ENCODE measurements at regions of chr17 and their contacts with region 1.

Region 1: DNA sequence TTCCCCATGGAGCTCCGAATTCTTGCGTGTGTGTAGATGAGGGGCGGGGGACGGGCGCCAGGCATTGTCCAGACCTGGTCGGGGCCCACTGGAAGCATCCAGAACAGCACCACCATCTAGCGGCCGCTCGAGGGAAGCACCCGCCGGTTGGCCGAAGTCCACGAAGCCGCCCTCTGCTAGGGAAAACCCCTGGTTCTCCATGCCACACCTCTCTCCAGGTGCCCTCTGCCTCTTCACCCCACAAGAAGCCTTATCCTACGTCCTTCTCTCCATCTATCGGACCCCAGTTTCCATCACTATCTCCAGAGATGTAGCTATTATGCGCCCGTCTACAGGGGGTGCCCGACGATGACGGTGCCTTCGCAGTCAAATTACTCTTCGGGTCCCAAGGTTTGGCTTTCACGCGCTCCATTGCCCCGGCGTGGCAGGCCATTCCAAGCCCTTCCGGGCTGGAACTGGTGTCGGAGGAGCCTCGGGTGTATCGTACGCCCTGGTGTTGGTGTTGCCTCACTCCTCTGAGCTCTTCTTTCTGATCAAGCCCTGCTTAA is 617 bp upstream of the SENP3 start:
- DNase-seq: peak; percentile 90
- CTCF ChIP-seq: peak; percentile 86

Region 2: DNA sequence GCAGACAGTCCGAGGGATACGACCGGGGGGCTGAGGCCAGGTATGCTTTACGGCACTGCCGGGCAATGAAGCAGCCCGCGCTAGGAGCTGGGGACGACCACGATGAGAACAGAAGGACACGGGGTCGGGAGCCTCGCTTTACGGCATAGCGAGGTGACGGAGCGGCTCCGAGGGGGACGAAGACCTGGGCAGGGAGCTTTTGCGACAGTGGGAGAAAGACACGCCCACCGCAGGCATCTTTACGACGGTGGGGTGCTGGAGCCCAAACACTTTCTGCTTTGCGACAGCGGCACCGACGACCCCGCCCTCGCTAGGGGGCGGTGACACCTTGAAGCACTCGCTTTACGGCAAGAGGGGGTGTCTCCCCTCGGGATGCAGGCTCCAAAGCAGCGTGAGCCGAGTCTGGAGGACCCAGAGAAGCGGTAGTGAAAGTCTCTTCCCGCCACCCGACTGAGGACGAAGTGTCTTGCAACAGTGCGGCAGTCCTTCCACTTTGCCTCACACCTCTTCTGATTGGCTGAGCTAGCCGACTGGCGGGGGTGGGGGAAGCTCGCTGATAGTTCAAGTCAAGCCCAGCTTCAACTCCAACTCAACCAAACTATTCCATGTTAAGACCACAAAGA is 231.6 kb before region 1 on chr17:
- CTCF ChIA-PET with region 1: interaction called, 12 read pairs
- POLR2A ChIA-PET with region 1: no interaction called
- DNase-seq: peak; percentile 95
- CTCF ChIP-seq: no peak

Region 3: DNA sequence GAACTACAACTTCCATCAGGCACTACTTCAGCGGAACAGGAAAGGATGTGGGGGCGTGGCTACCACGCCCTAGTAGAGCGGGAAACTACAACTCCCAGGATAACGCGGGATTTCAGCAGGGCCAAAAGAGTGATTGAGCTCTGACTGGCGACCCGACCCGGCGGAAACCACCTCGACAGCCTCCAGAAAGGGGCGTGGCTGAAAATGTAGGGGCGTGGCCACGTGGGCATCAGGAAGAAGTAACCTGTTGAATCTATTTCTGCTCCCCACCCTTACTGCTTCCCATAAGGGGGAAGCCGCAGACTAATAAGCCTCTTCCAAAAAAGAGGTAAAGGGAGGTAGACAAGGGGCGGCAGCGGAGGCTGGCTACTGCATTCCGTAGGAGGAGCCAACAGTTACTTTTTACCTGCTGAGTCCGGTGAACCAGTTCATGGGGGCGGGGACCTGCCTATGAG is 125.9 kb before region 1 on chr17 and contains the start of gene TMEM102:
- CTCF ChIA-PET with region 1: interaction called, 27 read pairs
- POLR2A ChIA-PET with region 1: interaction called, 3 read pairs
- DNase-seq: peak; percentile 97
- CTCF ChIP-seq: no peak

Region 4: DNA sequence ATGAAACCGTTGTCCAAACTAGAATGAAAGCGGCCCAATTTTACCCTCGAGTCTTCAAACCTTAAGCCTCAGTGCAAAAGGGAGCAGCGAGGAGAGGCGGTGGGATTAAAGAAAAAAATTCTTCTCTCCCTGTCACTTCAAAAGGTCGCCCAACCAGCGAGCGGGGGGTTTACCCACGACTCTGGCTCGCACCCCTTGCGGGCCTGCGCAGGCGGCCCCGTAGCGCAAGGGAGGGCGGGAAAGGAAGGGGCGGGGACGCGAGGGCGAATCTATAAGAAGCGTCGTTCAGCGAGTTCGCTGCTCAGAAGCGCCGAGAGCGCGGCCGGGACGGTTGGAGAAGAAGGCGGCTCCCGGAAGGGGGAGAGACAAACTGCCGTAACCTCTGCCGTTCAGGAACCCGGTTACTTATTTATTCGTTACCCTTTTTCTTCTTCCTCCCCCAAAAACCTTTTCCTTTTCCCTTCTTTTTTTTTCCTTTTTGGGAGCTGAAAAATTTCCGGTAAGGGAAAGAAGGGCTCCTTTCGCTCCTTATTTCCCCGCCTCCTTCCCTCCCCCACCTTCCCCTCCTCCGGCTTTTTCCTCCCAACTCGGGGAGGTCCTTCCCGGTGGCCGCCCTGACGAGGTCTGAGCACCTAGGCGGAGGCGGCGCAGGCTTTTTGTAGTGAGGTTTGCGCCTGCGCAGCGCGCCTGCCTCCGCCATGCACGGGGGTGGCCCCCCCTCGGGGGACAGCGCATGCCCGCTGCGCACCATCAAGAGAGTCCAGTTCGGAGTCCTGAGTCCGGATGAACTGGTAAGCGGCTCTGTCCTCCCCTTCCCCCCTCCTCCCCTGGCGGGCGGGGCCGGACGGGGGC is 76.8 kb before region 1 on chr17 and contains the start of gene POLR2A:
- CTCF ChIA-PET with region 1: interaction called, 11 read pairs
- POLR2A ChIA-PET with region 1: interaction called, 6 read pairs
- DNase-seq: peak; percentile 99
- CTCF ChIP-seq: no peak

Region 5: GRCh38 chr17:7515911-7516610 is 45.0 kb before region 1 on chr17:
- CTCF ChIA-PET with region 1: interaction called, 74 read pairs
- POLR2A ChIA-PET with region 1: no interaction called
- DNase-seq: no peak
- CTCF ChIP-seq: no peak

Region 6: DNA sequence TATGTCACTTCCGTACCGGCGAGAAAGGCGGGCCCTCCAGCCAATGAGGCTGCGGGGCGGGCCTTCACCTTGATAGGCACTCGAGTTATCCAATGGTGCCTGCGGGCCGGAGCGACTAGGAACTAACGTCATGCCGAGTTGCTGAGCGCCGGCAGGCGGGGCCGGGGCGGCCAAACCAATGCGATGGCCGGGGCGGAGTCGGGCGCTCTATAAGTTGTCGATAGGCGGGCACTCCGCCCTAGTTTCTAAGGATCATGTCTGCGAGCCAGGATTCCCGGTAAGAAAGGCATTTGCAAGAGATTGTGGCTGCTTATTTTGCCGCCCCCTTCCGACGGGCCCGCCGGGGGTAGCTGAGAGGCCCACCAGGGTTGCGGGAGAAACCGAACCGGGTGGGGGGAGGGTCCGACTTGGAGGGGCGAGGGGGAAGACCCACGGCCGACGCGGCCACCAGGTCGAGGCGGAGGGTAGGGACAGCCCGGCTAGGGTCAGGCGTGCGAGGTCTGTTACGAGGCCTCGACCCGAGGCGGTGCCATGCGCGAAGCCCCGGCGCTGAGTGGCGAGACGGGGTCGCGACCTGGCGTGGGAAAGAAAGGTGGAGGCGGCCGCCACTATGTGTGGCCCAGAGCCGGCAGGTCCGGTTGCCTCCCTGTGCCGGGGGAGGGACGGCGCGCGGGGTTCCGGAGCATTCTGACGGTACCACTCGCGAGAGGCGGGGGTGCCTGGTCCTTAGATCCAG is 11.7 kb after region 1 on chr17:
- CTCF ChIA-PET with region 1: interaction called, 23 read pairs
- POLR2A ChIA-PET with region 1: interaction called, 4 read pairs
- DNase-seq: peak; percentile 99
- CTCF ChIP-seq: no peak